Activated CD4-positive, alpha-beta T cell treated with anti-CD3 and anti-CD28 coated beads for 36 hours (primary cell): ENCODE measurements at regions of chr19 and their contacts with region 1.

Region 1: GRCh38 chr19:6110360-6110977 is at the start of gene RFX2:
- DNase-seq: peak; percentile 100
- ATAC-seq: peak; percentile 98
- H3K4me3 Mint-ChIP-seq: peak within 1 kb of the TSS; percentile 76
- H3K27ac Mint-ChIP-seq: peak within 1 kb of the TSS; percentile 60
- H3K4me1 Mint-ChIP-seq: peaks cover 23% of the 10 kb centered on the region
- H3K27me3 Mint-ChIP-seq: peaks cover 16% of the 10 kb centered on the region
- total RNA-seq, gene RFX2: 8.6 to 8.9 TPM

Region 2: DNA sequence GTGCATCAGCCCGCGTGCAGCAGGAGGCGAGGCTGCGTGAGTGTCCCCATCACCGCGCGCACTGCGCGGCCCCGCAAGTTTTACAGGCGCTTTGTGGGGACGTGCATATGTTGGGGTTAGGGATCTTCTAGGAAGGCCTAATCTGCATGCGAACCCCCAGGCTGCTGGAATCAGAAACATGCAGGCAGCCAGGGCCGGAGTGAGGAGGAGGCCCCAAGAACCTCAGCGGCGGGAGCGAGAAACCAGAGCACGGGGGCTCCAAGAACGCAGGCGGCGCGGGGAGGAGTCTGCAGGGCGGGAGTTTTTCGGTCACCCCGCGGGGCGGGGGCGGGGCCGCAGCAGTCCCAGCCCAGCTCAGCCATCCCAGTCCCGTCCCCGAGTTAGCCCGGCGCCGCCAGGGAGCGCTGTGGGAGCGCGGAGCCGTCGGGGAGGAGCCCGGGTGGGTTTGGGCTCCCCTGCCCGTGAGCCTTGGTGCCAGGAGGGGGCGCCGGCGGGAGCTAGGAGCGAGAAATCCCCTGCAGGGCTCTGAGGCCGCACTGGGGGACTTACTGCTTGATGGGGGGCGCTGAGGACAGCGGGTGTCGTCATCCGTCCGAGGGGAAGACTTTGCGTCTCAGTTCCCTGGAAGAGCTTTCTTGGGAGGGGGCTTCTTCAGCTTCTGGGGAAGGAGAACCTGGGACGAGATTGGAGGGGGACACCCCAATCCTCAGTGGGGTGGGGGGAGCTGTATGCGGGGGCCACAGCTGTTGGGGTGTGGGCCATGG is 306.5 kb before region 1 on chr19:
- CTCF ChIA-PET with region 1: no interaction called
- POLR2A ChIA-PET with region 1: no interaction called
- intact Hi-C with region 1: loop called in 1 of 2 experiments (anchors 1 kb)
- DNase-seq: peak; percentile 98
- ATAC-seq: peak; percentile 97
- H3K4me3 Mint-ChIP-seq: peak overlapping the region; percentile 63
- H3K27ac Mint-ChIP-seq: peak overlapping the region; percentile 47
- H3K4me1 Mint-ChIP-seq: peaks cover 21% of the 10 kb centered on the region
- H3K27me3 Mint-ChIP-seq: peaks cover 20% of the 10 kb centered on the region

Region 3: DNA sequence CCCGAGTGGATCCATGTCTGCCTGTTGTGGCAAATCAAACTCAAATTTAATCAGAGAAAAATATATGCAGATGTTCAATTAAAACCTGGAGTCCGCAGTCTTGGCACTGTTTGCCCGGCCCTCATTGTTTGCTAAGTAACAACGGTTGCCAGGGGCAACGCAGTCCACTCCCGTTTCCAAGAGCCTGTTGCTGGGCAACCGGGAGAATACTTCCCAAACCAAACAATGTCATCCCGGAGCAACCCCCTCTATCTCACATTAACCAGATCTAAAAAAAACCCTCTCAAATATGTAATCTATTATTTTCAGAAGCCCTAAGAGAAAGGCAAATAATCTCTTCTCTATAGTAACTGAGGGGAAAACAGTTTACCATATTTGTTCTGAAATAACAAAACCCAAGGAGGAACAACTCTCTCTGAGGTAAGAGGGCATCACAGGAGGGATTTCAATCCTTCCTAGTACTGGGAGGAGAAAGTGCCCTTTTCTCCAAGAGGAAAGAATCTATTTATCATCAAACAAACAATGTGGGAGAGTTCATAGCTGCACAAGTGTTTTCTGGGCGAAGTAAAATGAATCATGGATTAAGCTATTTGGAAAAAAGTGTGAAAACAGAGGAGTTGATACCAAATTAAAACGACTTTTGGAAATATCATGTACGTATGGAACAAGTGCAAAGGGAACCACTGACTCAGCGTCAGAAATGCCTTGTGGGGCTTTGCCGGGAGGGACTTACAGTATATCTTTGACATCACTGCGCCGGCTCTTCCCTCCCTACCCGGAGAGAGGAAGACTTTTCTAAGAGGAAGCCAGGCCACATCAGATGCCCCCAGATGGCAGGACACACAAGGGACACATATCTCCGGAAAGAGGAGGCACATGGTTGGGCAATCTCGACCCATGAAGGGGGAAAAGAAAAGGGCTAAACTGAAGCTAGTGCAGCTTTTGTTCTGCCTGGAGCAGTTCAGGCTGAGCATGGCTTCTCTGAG is 43.5 kb before region 1 on chr19:
- CTCF ChIA-PET with region 1: no interaction called
- POLR2A ChIA-PET with region 1: no interaction called
- intact Hi-C with region 1: loop called (anchors 1 to 5 kb)
- DNase-seq: peak; percentile 21
- ATAC-seq: no peak
- H3K4me3 Mint-ChIP-seq: no peak overlapping the region
- H3K27ac Mint-ChIP-seq: peak overlapping the region; percentile 49
- H3K4me1 Mint-ChIP-seq: peaks cover 39% of the 10 kb centered on the region
- H3K27me3 Mint-ChIP-seq: peaks cover 5% of the 10 kb centered on the region

Region 4: GRCh38 chr19:6233051-6233826 is 122.8 kb after region 1 on chr19:
- CTCF ChIA-PET with region 1: no interaction called
- POLR2A ChIA-PET with region 1: no interaction called
- intact Hi-C with region 1: no loop called
- DNase-seq: no peak
- ATAC-seq: no peak
- H3K4me3 Mint-ChIP-seq: no peak overlapping the region
- H3K27ac Mint-ChIP-seq: no peak overlapping the region
- H3K4me1 Mint-ChIP-seq: peaks cover 24% of the 10 kb centered on the region
- H3K27me3 Mint-ChIP-seq: no peaks in the 10 kb centered on the region

Region 5: DNA sequence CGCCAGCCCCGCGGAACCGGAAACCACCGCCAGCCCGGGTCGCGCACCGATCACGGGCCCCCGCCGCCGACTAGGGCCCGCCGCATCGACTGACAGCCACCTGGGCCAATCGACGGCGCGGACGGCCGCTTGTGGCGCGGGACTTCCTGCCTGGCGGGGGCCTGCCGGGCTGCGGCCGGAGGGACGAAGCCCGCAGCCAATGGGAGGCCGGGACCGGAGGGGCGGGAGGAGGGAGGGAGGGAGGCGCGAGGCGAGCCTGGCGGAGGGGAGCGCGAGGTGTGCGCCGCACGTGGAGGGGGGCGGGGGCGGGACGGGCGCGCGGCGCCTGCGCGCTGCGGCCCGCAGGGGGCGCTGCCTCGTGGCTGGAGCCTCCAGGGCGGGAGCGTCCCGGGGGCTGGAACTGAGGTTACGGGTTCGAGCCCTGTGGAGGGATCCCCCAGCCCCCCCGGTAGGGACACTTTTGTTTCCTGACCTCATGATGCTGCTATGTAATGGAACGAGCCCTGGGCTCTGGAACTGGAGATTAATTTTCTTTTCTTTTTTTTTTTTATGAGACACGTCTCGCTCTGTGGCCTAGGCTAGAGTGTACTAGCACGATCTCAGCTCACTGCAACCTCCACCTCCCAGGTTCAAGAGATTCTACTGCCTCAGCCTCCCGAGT is 169.6 kb after region 1 on chr19 and contains the start of gene MLLT1:
- CTCF ChIA-PET with region 1: no interaction called
- POLR2A ChIA-PET with region 1: no interaction called
- intact Hi-C with region 1: loop called in 1 of 2 experiments (anchors 1 kb)
- DNase-seq: peak; percentile 98
- ATAC-seq: peak; percentile 98
- H3K4me3 Mint-ChIP-seq: peak within 1 kb of the TSS; percentile 98
- H3K27ac Mint-ChIP-seq: peak within 1 kb of the TSS; percentile 93
- H3K4me1 Mint-ChIP-seq: peaks cover 38% of the 10 kb centered on the region
- H3K27me3 Mint-ChIP-seq: peaks cover 2% of the 10 kb centered on the region
- total RNA-seq, gene MLLT1: 45.0 to 46.6 TPM

Region 6: GRCh38 chr19:6393074-6393983 is 282.9 kb after region 1 on chr19 and contains the start of gene GTF2F1:
- CTCF ChIA-PET with region 1: no interaction called
- POLR2A ChIA-PET with region 1: no interaction called
- intact Hi-C with region 1: loop called in 1 of 2 experiments (anchors 1 kb)
- DNase-seq: peak; percentile 96
- ATAC-seq: peak; percentile 89
- H3K4me3 Mint-ChIP-seq: peak within 1 kb of the TSS; percentile 85
- H3K27ac Mint-ChIP-seq: peak within 1 kb of the TSS; percentile 91
- H3K4me1 Mint-ChIP-seq: peaks cover 22% of the 10 kb centered on the region
- H3K27me3 Mint-ChIP-seq: no peaks in the 10 kb centered on the region
- total RNA-seq, gene GTF2F1: 60.9 to 78.5 TPM